Right ventricle myocardium superior (tissue), 1 donor: ENCODE measurements at regions of chr19 and their contacts with region 1.

Region 1: GRCh38 chr19:10769533-10770491 is 51.9 kb downstream of the DNM2 start:
- DNase-seq: peak; percentile 73
- ATAC-seq: peak; percentile 79

Region 2: DNA sequence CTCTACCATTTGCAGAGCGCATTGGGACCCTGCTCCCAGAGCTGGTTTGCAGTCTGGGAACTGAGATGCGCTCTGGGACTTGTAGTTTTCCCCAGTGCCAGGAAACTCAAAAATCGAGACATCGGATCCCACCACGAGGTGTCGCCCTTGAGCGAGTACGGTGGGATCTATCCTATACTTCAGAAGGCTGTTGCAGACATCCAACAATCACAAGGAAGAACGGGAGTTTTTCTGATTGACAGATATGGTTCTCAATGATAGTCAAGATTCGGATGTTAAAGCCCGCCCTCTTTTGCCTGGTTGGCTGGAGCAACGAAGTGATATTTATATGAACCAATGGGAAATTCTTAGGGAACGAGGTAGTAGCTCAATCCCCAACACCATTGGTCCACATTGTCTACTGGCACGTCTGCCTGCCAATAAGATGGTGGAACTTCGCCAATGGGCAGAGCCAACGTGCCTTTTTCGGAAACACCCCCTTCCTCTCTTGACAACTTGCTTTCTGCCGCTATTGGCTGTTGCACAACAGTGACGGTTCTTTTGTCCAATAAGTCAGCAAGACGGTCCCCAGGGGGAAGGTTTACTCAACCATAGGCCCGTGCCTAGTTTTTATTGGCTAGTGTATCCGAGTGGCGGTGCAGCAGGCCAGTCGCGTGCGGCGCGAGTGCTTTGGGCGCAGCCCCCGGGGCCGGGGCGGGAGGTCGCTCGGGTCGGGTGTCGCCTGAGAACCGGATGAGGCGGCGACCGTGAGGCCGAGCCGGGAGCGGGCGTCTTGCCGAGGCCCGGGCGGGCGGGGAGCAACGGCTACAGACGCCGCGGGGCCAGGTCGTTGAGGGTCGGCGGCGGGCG is 52.2 kb before region 1 on chr19 and contains the start of gene DNM2:
- intact Hi-C with region 1: loop called (anchors 2 kb)
- DNase-seq: peak; percentile 99
- ATAC-seq: peak; percentile 93
- total RNA-seq, gene DNM2: 180 TPM

Region 3: DNA sequence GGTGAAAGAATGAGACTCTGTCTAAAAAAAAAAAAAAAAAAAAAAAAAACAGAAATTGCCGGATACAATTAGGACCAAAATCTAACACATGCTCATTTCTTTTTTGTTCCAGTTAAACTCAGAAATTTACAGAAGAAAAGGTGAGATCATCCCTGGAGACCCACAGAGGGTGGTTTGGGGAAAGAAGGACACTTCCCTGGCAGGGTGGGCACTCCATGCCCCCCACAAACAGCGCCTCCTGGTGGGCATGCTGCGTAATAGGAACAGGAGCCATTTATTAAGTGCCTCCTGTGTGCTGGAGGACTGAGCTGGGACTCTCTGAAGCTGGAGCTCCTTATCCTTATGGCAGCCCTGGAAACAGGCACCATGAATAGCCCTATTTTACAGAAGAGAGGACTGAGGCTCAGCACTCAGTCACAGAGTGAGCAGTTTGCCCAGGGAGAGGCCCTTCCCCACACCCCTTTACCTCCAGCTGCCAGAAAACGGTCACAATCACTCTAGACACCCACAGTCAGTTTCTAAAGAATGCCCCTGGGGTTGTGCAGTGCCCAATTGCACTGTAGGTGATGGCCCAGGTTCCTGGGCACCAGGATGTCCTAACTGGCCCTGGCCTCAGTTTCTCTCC is 88.5 kb after region 1 on chr19:
- intact Hi-C with region 1: no loop called
- DNase-seq: no peak
- ATAC-seq: no peak